Astrocyte of the cerebellum (primary cell): ENCODE measurements at regions of chr6 and their contacts with region 1.

Region 1: DNA sequence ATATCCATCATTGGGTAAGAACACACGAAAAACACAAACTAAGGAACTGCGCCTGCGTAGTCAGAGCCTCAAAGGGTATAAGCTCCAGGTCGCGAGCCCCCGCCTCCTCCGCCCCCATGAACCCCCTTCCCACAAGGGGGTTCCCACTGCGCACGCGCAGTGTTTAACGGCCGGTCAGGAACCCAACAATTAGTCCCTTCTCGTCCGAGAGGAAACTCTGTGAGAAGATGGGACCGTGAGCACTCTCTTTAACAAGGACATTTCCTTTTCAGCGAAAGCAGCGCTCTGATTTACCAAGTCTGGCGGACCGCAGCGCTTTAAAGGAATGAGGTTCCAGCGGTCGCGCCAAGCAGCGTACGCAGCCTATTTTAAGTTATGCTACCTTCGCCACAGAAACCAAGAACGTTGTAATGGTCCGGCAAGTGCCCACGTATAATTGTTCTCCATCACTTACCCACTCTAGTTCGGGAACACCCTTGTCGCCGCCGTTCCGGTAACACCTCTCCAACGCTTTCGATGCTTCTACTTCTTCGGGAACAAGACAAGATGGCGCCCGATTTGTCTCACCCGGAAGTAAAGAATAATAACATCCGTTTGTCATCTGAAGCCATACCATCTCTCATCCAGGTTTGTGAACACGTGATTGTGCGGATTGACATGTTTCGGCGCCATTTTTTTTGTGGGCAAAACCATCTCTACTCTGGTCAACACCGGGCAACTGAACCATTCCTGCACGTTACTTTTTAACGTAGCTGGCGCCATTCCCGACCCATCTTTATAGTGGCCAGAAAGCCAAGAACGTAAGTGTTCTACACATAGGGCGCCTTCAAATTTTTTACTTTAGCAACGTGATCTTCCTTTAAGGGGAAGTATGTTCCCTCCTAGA is at the start of gene PNISR:
- DNase-seq: peak; percentile 99
- H3K4me3 ChIP-seq: peak within 1 kb of the TSS; percentile 94
- CTCF ChIP-seq: no peak

Region 2: GRCh38 chr6:99514089-99514488 is 89.1 kb after region 1 on chr6:
- in situ Hi-C with region 1: loop called (anchors 5 kb)
- DNase-seq: no peak
- H3K4me3 ChIP-seq: peak overlapping the region; percentile 82
- CTCF ChIP-seq: no peak